ENCODE measurements at regions of chr11 and their contacts with region 1.

Region 1: GRCh38 chr11:36354221-36355003 is 58.3 kb downstream of the PRR5L start:
- DNase-seq: peak in 1 of 14 experiments; percentile 35
- ATAC-seq: no peak
- H3K4me3 ChIP-seq: no peak overlapping the region
- H3K4me3 Mint-ChIP-seq: no peak overlapping the region
- H3K27ac ChIP-seq: no peak overlapping the region
- H3K27ac Mint-ChIP-seq: no peak overlapping the region
- H3K4me1 ChIP-seq: peaks cover 22% of the 10 kb centered on the region
- H3K4me1 Mint-ChIP-seq: peaks cover 44% of the 10 kb centered on the region
- H3K27me3 ChIP-seq: no peaks in the 10 kb centered on the region
- H3K27me3 Mint-ChIP-seq: no peaks in the 10 kb centered on the region
- CTCF ChIP-seq: no peak

Region 2: DNA sequence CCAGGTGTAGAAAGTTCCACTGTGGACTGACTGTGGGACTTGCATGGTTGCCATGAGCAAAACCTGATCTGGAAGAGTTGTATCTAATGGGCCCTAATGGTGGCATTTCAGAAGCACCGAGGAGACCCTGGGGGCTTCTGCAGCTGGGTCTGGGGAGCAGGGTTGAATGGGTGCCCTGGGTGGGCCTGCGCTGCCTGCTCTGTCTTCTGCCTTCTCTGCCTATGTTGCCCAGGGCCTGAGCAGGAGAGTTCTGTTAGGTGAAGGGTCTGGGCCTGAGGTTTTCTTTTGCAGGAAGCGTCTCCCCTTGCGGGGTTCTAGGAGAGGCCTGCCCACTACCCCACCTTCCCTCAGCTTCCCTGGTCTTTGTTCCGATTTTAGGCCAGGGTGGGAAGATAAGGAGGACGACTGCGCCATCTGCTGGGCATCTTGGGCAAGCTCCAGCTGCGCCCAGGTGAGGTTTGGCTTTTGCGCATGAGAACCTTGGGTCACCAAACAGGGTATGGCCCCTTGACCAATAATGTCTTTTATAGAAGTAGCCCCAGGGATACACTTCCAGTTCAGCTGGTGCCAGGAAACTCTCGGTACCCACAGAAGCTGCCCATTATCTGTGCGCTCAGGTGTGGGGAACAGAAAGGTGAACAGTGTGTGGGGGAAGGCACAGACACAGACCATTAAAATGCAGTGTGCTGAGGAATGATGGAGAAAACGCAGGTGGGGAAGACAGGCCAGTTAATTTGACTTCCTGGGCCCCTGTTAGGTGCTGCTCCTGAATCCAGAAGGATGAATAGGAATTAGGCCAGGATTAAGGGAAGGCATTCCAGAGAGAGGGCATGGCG is 88.4 kb before region 1 on chr11:
- CTCF ChIA-PET with region 1: no interaction called
- POLR2A ChIA-PET with region 1: no interaction called
- intact Hi-C with region 1: no loop called
- DNase-seq: peak; percentile 19 to 74 (median 44)
- ATAC-seq: peak; percentile 58
- H3K4me3 ChIP-seq: no peak overlapping the region
- H3K4me3 Mint-ChIP-seq: no peak overlapping the region
- H3K27ac ChIP-seq: no peak overlapping the region
- H3K27ac Mint-ChIP-seq: no peak overlapping the region
- H3K4me1 ChIP-seq: peaks cover 2% of the 10 kb centered on the region
- H3K4me1 Mint-ChIP-seq: no peaks in the 10 kb centered on the region
- H3K27me3 ChIP-seq: no peaks in the 10 kb centered on the region
- H3K27me3 Mint-ChIP-seq: peaks cover 19% of the 10 kb centered on the region
- CTCF ChIP-seq: peak; percentile 79

Region 3: GRCh38 chr11:36306888-36307287 is 47.5 kb before region 1 on chr11:
- CTCF ChIA-PET with region 1: no interaction called
- POLR2A ChIA-PET with region 1: no interaction called
- intact Hi-C with region 1: no loop called
- DNase-seq: peak in 4 of 14 experiments; percentile 15 to 58 (median 46)
- ATAC-seq: no peak
- H3K4me3 ChIP-seq: no peak overlapping the region
- H3K4me3 Mint-ChIP-seq: no peak overlapping the region
- H3K27ac ChIP-seq: no peak overlapping the region
- H3K27ac Mint-ChIP-seq: no peak overlapping the region
- H3K4me1 ChIP-seq: no peaks in the 10 kb centered on the region
- H3K4me1 Mint-ChIP-seq: peaks cover 7% of the 10 kb centered on the region
- H3K27me3 ChIP-seq: peaks cover 0 to 4% of the 10 kb centered on the region in 2 experiments
- H3K27me3 Mint-ChIP-seq: peaks cover 22% of the 10 kb centered on the region
- CTCF ChIP-seq: peak; percentile 33

Region 4: GRCh38 chr11:36376888-36377758 is 22.7 kb after region 1 on chr11:
- CTCF ChIA-PET with region 1: interaction called, 20 read pairs
- POLR2A ChIA-PET with region 1: interaction called, 18 read pairs
- intact Hi-C with region 1: no loop called
- DNase-seq: peak; percentile 14 to 80 (median 34)
- ATAC-seq: peak; percentile 66
- H3K4me3 ChIP-seq: peak overlapping the region; percentile 78
- H3K4me3 Mint-ChIP-seq: peak overlapping the region; percentile 91
- H3K27ac ChIP-seq: peak overlapping the region; percentile 23 to 46
- H3K27ac Mint-ChIP-seq: peak overlapping the region; percentile 86
- H3K4me1 ChIP-seq: peaks cover 42% of the 10 kb centered on the region
- H3K4me1 Mint-ChIP-seq: peaks cover 39% of the 10 kb centered on the region
- H3K27me3 ChIP-seq: peaks cover 12 to 28% of the 10 kb centered on the region in 2 experiments
- H3K27me3 Mint-ChIP-seq: peaks cover 60% of the 10 kb centered on the region
- CTCF ChIP-seq: peak; percentile 42

Region 5: GRCh38 chr11:36385121-36385970 is 30.9 kb after region 1 on chr11:
- CTCF ChIA-PET with region 1: interaction called, 11 read pairs
- POLR2A ChIA-PET with region 1: interaction called, 4 read pairs
- intact Hi-C with region 1: no loop called
- DNase-seq: peak in 4 of 14 experiments; percentile 24 to 52 (median 41)
- ATAC-seq: peak; percentile 74
- H3K4me3 ChIP-seq: no peak overlapping the region
- H3K4me3 Mint-ChIP-seq: peak overlapping the region; percentile 47
- H3K27ac ChIP-seq: peak overlapping the region in 1 of 2 donors; percentile 34
- H3K27ac Mint-ChIP-seq: peak overlapping the region; percentile 63
- H3K4me1 ChIP-seq: peaks cover 25% of the 10 kb centered on the region
- H3K4me1 Mint-ChIP-seq: peaks cover 7% of the 10 kb centered on the region
- H3K27me3 ChIP-seq: no peaks in the 10 kb centered on the region
- H3K27me3 Mint-ChIP-seq: peaks cover 2% of the 10 kb centered on the region
- CTCF ChIP-seq: no peak

Region 6: GRCh38 chr11:36455658-36456111 is 101.3 kb after region 1 on chr11:
- CTCF ChIA-PET with region 1: interaction called, 4 read pairs
- POLR2A ChIA-PET with region 1: interaction called, 5 read pairs
- intact Hi-C with region 1: loop called in 1 of 2 experiments (anchors 10 kb)
- DNase-seq: no peak
- ATAC-seq: no peak
- H3K4me3 ChIP-seq: no peak overlapping the region
- H3K4me3 Mint-ChIP-seq: no peak overlapping the region
- H3K27ac ChIP-seq: no peak overlapping the region
- H3K27ac Mint-ChIP-seq: no peak overlapping the region
- H3K4me1 ChIP-seq: peaks cover 38% of the 10 kb centered on the region
- H3K4me1 Mint-ChIP-seq: peaks cover 30% of the 10 kb centered on the region
- H3K27me3 ChIP-seq: no peaks in the 10 kb centered on the region
- H3K27me3 Mint-ChIP-seq: no peaks in the 10 kb centered on the region
- CTCF ChIP-seq: no peak

Region 7: DNA sequence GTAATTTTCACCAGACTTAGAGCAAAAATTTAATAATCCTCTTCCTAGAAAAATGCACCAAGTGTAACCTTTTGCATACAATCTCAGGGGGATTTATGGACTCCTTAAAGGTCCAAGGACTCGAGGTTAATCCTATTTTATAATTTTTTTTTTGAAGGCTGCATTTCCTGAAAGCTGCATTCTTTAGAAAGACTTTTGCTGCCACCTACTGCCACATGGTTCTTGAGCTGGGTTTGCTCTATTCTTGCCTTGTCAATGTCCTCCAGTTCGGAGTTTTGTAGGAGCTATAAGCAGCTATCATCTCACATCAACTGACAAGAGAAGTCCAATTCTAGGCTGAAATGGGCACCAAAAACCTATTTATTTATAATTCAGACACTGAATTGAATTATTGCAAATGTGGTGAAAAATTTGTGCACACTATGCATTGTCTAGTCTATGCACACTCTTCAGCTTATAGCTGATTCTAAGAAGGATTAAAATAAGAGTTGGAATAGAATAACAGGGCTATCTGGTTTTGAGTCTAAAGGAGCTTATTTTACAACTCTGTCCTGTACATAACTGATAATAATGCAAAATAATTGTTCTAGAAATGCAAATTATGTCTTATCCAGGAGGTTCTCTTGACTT is 124.4 kb after region 1 on chr11:
- CTCF ChIA-PET with region 1: interaction called, 4 read pairs
- POLR2A ChIA-PET with region 1: interaction called, 5 read pairs
- intact Hi-C with region 1: loop called (anchors 2 to 5 kb)
- DNase-seq: peak in 5 of 14 experiments; percentile 7 to 70 (median 56)
- ATAC-seq: no peak
- H3K4me3 ChIP-seq: no peak overlapping the region
- H3K4me3 Mint-ChIP-seq: no peak overlapping the region
- H3K27ac ChIP-seq: no peak overlapping the region
- H3K27ac Mint-ChIP-seq: no peak overlapping the region
- H3K4me1 ChIP-seq: peaks cover 2% of the 10 kb centered on the region
- H3K4me1 Mint-ChIP-seq: peaks cover 2% of the 10 kb centered on the region
- H3K27me3 ChIP-seq: no peaks in the 10 kb centered on the region
- H3K27me3 Mint-ChIP-seq: no peaks in the 10 kb centered on the region
- CTCF ChIP-seq: peak; percentile 57

Region 8: DNA sequence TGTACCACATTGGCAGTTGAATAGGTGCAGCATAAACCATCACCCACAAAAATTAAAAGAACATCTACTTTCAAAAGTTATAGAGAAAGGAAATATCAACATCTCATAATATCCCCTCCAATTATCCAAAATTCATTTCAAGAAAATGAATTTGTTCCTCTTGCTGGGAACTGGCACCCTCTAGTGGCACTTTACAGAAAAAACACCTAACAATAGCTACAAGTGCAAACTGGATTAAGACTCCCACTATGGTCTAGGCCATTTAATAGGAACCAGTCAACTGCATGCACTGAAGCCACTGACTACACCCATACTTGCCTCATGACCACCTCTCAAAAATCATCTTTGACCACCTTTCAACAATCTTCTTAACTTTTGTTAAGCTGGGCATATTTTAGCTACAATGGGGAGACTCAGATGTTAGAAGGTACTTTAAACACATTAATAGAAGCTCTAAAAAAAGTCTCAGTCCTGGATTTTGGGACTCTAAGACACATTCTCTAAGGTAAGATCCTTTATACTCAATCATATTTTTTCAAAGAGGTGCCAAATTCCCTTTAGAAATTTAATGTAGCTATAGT is 138.4 kb after region 1 on chr11:
- CTCF ChIA-PET with region 1: interaction called, 13 read pairs
- POLR2A ChIA-PET with region 1: interaction called, 8 read pairs
- intact Hi-C with region 1: loop called in 1 of 2 experiments (anchors 1 kb)
- DNase-seq: peak in 6 of 14 experiments; percentile 11 to 77 (median 52)
- ATAC-seq: peak; percentile 67
- H3K4me3 ChIP-seq: no peak overlapping the region
- H3K4me3 Mint-ChIP-seq: no peak overlapping the region
- H3K27ac ChIP-seq: no peak overlapping the region
- H3K27ac Mint-ChIP-seq: peak overlapping the region; percentile 18
- H3K4me1 ChIP-seq: peaks cover 2% of the 10 kb centered on the region
- H3K4me1 Mint-ChIP-seq: peaks cover 33% of the 10 kb centered on the region
- H3K27me3 ChIP-seq: no peaks in the 10 kb centered on the region
- H3K27me3 Mint-ChIP-seq: no peaks in the 10 kb centered on the region
- CTCF ChIP-seq: peak; percentile 89